Naive thymus-derived CD4-positive, alpha-beta T cell (primary cell): ENCODE measurements at regions of chr1 and their contacts with region 1.

Region 1: DNA sequence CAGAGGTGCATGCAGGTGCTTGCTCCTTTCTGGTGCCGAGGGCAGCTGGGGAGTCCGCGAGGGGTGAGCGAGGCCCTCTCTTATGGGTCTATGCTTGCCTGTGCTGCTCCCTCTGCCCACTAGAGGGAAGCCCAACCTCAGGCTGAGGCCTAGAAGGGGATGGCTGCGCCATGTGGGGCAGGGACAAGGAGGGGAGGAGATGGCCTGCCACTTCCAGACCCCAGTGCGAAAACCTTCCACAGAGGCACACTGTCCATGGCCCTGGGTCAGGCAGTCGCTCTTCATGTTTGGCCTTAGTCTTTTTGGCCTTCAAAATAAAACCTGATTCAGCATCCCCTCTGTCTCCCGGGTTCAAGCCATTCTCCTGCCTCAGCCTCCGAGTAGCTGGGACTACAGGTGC is 14.0 kb downstream of the RHBG start:
- DNase-seq: peak; percentile 9 to 57 (median 46)
- ATAC-seq: peak; percentile 90
- H3K4me3 ChIP-seq: no peak overlapping the region
- H3K4me3 Mint-ChIP-seq: no peak overlapping the region
- H3K27ac ChIP-seq: no peak overlapping the region
- H3K27ac Mint-ChIP-seq: no peak overlapping the region
- H3K4me1 ChIP-seq: peaks cover 6 to 8% of the 10 kb centered on the region in 2 donors
- H3K4me1 Mint-ChIP-seq: peaks cover 5 to 7% (median 6%) of the 10 kb centered on the region in 7 donors
- H3K27me3 ChIP-seq: peaks cover 0 to 3% of the 10 kb centered on the region in 2 donors
- H3K27me3 Mint-ChIP-seq: peaks cover 0 to 23% (median 12%) of the 10 kb centered on the region in 5 donors

Region 2: DNA sequence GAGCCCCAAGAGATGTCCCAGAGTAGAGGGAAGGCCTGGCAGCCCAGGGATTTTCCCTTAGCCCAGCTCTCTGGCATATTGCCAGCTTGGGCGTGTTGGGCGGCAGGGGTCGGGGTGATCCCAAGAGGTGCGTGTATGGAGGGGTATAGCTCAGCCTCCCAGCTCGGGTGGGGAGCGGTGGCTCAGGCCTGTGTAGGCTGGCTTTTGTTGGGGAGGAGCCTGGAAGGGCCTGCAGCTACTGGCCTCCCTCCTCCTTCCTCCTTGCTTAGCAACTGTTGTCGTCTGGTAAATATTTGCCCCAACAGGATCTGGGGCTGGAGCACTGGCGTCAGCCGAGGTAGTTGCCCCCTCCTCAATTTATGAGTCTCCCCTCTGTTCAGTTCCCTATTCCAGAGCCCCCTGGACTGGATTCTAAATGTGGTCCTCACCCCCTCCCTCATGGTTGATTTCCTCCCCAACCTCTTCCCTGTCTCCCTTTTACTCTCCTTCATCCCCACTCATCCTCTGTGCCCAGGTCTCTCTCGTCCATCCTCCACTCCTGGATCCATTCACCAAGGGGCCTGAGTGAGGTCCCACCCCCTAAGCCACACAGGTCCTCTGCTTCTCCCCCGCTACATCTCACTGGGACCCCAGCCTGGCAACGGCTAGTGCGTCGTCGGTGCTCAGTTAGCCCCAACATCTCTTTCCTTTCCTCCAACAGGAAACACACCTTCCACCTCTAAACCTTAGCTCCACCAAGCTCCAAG is 278.8 kb before region 1 on chr1:
- CTCF ChIA-PET with region 1: no interaction called
- POLR2A ChIA-PET with region 1: no interaction called
- intact Hi-C with region 1: no loop called
- DNase-seq: peak in 5 of 9 donors; percentile 28 to 60 (median 32)
- ATAC-seq: peak; percentile 36
- H3K4me3 ChIP-seq: no peak overlapping the region
- H3K4me3 Mint-ChIP-seq: peak overlapping the region in 4 of 10 donors; percentile 20 to 82 (median 60)
- H3K27ac ChIP-seq: no peak overlapping the region
- H3K27ac Mint-ChIP-seq: peak overlapping the region; percentile 31 to 99 (median 93)
- H3K4me1 ChIP-seq: peaks cover 12 to 38% of the 10 kb centered on the region in 2 donors
- H3K4me1 Mint-ChIP-seq: peaks cover 12 to 54% (median 28%) of the 10 kb centered on the region in 7 donors
- H3K27me3 ChIP-seq: no peaks in the 10 kb centered on the region
- H3K27me3 Mint-ChIP-seq: peaks cover 0 to 53% (median 0%) of the 10 kb centered on the region in 5 donors

Region 3: DNA sequence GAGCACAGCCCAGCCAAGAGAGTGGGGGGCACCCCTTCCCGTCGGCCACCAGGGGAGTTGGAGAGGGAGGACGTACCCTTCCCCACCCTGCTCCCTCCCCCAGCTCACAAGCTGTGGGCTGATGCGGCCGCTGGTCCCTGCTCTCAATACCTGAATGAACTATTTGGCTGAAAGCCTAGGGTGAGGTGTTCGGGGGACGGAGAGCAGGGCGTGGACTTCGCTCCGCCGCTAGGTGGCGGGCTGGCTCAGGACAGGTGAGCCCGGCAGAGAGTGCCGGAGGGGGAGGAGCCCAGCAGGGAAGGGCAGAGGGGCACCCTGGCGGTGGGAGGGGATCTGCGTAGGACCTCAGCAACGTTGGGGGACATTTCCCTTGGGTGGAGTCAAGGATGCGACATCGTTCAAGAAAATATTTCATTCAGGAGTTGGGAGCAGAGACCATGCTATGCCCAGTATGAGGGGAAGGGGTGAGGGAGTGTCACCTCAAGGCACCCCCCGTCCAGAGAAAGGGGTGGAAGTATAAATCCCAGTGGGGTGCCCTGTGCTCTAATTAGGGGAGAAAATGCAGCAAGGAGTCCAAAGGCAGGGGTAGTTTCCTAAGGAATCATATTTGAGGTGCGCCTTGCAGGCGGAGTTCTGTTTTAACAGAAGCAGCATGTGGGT is 26.0 kb before region 1 on chr1:
- CTCF ChIA-PET with region 1: interaction called, 10 read pairs
- POLR2A ChIA-PET with region 1: no interaction called
- intact Hi-C with region 1: loop called in 1 of 2 experiments (anchors 1 kb)
- DNase-seq: peak; percentile 27 to 78 (median 54)
- ATAC-seq: peak; percentile 97
- H3K4me3 ChIP-seq: no peak overlapping the region
- H3K4me3 Mint-ChIP-seq: peak overlapping the region in 6 of 10 donors; percentile 2 to 21 (median 11)
- H3K27ac ChIP-seq: no peak overlapping the region
- H3K27ac Mint-ChIP-seq: no peak overlapping the region
- H3K4me1 ChIP-seq: no peaks in the 10 kb centered on the region
- H3K4me1 Mint-ChIP-seq: peaks cover 0 to 11% (median 4%) of the 10 kb centered on the region in 7 donors
- H3K27me3 ChIP-seq: no peaks in the 10 kb centered on the region
- H3K27me3 Mint-ChIP-seq: peaks cover 8 to 47% (median 18%) of the 10 kb centered on the region in 5 donors

Region 4: DNA sequence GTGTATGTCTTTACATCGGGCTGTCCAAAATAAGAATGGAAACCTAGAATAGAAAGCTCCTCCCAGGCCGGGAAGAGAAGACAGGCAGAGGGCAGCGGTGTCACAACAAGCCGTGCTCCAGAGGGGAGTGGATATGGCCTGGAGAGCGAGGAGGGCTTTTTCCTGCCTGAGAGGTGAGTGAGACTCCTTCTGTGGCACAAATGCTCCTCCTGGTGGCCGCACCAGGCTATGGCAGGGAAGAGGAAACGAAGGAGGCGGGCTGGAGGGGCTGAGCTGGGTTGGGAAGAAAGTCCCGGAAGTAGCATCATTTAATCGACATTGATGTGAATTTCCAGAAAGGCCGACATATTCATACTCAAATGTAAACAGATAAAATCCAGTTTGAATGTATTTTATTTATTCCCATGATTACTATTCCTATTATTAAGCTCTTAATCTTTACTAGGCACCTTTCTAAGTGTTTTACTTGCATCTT is 62.8 kb after region 1 on chr1:
- CTCF ChIA-PET with region 1: interaction called, 129 read pairs
- POLR2A ChIA-PET with region 1: interaction called, 17 read pairs
- intact Hi-C with region 1: loop called (anchors 1 kb)
- DNase-seq: peak; percentile 60 to 83 (median 74)
- ATAC-seq: peak; percentile 92
- H3K4me3 ChIP-seq: no peak overlapping the region
- H3K4me3 Mint-ChIP-seq: peak overlapping the region in 4 of 10 donors; percentile 8 to 26 (median 13)
- H3K27ac ChIP-seq: no peak overlapping the region
- H3K27ac Mint-ChIP-seq: peak overlapping the region in 2 of 9 donors; percentile 10 to 48
- H3K4me1 ChIP-seq: peaks cover 0 to 6% of the 10 kb centered on the region in 2 donors
- H3K4me1 Mint-ChIP-seq: peaks cover 0 to 9% (median 8%) of the 10 kb centered on the region in 7 donors
- H3K27me3 ChIP-seq: peaks cover 10 to 11% of the 10 kb centered on the region in 2 donors
- H3K27me3 Mint-ChIP-seq: peaks cover 39 to 60% (median 45%) of the 10 kb centered on the region in 5 donors

Region 5: DNA sequence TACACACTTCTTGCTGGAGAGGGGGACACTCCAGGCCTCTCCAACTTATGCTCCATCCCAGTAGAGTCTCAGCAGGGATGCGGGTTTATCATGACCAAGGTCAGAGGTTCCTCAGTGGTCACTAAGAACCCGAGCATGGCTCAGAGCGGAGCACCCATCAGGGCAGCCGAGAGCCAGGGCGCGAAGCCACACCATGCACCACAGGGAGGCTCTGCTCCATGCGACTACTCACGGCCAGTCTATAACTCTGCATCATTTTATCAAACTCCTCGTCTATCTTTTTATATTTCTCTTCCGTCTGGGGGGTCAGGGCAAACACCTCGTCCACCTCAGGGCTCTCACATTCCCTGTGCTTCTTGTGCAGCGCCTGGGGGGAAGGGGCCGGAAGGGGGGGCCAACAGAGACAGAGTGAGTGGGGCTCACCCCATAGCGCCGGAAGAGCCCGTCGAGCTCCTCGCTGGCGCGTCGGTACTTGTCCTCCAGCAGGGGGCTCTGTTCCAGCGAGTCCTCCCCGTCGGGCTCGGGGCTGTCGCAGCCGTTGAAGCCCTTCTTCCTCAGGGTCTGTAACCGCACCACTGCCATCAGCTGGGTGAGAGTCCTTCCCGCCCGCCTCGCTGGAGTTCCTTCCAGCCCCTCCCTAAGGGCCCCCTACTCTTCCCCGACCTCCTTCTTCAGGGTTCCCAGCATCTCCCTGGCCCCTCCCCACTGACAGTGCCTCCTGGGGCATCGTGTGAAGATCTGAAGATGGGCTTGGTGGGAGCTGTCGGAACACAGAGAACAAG is 97.6 kb after region 1 on chr1:
- CTCF ChIA-PET with region 1: interaction called, 11 read pairs
- POLR2A ChIA-PET with region 1: no interaction called
- intact Hi-C with region 1: no loop called
- DNase-seq: peak; percentile 63 to 88 (median 79)
- ATAC-seq: peak; percentile 87
- H3K4me3 ChIP-seq: no peak overlapping the region
- H3K4me3 Mint-ChIP-seq: peak overlapping the region in 6 of 10 donors; percentile 23 to 51 (median 43)
- H3K27ac ChIP-seq: peak overlapping the region; percentile 46
- H3K27ac Mint-ChIP-seq: peak overlapping the region; percentile 74 to 99 (median 89)
- H3K4me1 ChIP-seq: peaks cover 12 to 25% of the 10 kb centered on the region in 2 donors
- H3K4me1 Mint-ChIP-seq: peaks cover 42 to 67% (median 54%) of the 10 kb centered on the region in 7 donors
- H3K27me3 ChIP-seq: no peaks in the 10 kb centered on the region
- H3K27me3 Mint-ChIP-seq: no peaks in the 10 kb centered on the region

Region 6: GRCh38 chr1:156608036-156608674 is 225.1 kb after region 1 on chr1:
- CTCF ChIA-PET with region 1: interaction called, 26 read pairs
- POLR2A ChIA-PET with region 1: no interaction called
- intact Hi-C with region 1: loop called (anchors 1 kb)
- DNase-seq: peak in 7 of 9 donors; percentile 55 to 79 (median 72)
- ATAC-seq: peak; percentile 97
- H3K4me3 ChIP-seq: no peak overlapping the region
- H3K4me3 Mint-ChIP-seq: no peak overlapping the region
- H3K27ac ChIP-seq: no peak overlapping the region
- H3K27ac Mint-ChIP-seq: no peak overlapping the region
- H3K4me1 ChIP-seq: peaks cover 0 to 4% of the 10 kb centered on the region in 2 donors
- H3K4me1 Mint-ChIP-seq: peaks cover 0 to 12% (median 6%) of the 10 kb centered on the region in 7 donors
- H3K27me3 ChIP-seq: no peaks in the 10 kb centered on the region
- H3K27me3 Mint-ChIP-seq: peaks cover 0 to 27% (median 14%) of the 10 kb centered on the region in 5 donors

Region 7: GRCh38 chr1:156659994-156660751 is 277.1 kb after region 1 on chr1:
- CTCF ChIA-PET with region 1: interaction called, 5 read pairs
- POLR2A ChIA-PET with region 1: no interaction called
- intact Hi-C with region 1: loop called in 1 of 2 experiments (anchors 1 kb)
- DNase-seq: peak; percentile 82 to 96 (median 89)
- ATAC-seq: peak; percentile 95
- H3K4me3 ChIP-seq: no peak overlapping the region
- H3K4me3 Mint-ChIP-seq: peak overlapping the region in 9 of 10 donors; percentile 4 to 90 (median 48)
- H3K27ac ChIP-seq: no peak overlapping the region
- H3K27ac Mint-ChIP-seq: peak overlapping the region in 8 of 9 donors; percentile 53 to 87 (median 69)
- H3K4me1 ChIP-seq: peaks cover 32 to 39% of the 10 kb centered on the region in 2 donors
- H3K4me1 Mint-ChIP-seq: peaks cover 33 to 62% (median 44%) of the 10 kb centered on the region in 7 donors
- H3K27me3 ChIP-seq: peaks cover 0 to 13% of the 10 kb centered on the region in 2 donors
- H3K27me3 Mint-ChIP-seq: peaks cover 18 to 30% (median 24%) of the 10 kb centered on the region in 5 donors